ENCODE measurements at regions of chr5 and their contacts with region 1.

Region 1: DNA sequence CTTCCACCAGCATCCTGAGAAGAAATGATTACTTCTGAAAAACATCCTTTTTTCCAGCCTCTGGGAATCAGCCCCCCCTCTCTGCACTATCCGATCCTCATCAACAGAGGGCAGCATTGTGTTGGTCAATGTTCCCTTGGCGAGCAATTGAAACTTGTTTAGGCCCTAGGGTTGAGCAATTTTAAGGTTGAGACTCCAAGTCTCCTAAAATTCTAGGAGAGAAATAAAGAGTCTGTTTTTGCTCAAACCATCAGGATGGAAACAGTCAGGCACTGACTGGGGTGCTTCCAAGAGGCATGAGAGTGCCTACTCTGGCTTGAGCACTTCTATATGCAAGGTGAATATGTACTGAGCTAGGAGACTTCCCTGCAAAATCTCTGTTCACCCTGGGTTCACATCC is 12.4 kb upstream of the CYFIP2 start:
- DNase-seq: no peak
- H3K4me3 ChIP-seq: no peak overlapping the region
- H3K4me3 Mint-ChIP-seq: peak overlapping the region in 7 of 8 donors; percentile 61 to 86 (median 79)
- H3K27ac ChIP-seq: peak overlapping the region; percentile 64
- H3K27ac Mint-ChIP-seq: peak overlapping the region; percentile 84 to 98 (median 94)
- H3K4me1 ChIP-seq: peaks cover 97% of the 10 kb centered on the region
- H3K4me1 Mint-ChIP-seq: peaks cover 78 to 96% (median 88%) of the 10 kb centered on the region in 4 donors
- H3K27me3 ChIP-seq: no peaks in the 10 kb centered on the region
- H3K27me3 Mint-ChIP-seq: no peaks in the 10 kb centered on the region

Region 2: DNA sequence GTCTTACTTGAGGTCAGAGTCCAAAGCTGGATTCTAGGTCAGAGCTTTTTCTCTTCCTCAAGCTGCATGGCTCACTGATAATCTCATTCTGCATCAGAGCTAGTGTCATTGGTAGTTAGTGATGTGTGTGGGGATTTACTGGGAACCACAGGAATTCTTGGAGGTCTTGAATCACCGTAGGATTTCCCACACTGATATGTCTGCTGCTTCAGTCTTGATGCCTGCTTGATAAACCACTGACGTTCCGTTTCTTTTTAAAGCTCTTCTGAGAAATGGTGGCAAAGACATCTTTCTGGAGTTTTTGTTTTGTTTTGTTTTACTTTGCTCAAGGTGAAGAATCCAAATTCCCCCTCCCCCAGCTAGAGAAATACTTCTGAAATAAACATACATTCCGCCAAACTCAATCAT is 86.3 kb before region 1 on chr5:
- CTCF ChIA-PET with region 1: interaction called, 10 read pairs
- POLR2A ChIA-PET with region 1: interaction called, 7 read pairs
- intact Hi-C with region 1: no loop called
- DNase-seq: no peak
- H3K4me3 ChIP-seq: peak overlapping the region in 1 of 2 donors; percentile 12
- H3K4me3 Mint-ChIP-seq: peak overlapping the region; percentile 4 to 85 (median 67)
- H3K27ac ChIP-seq: peak overlapping the region; percentile 56
- H3K27ac Mint-ChIP-seq: peak overlapping the region; percentile 71 to 95 (median 80)
- H3K4me1 ChIP-seq: peaks cover 42% of the 10 kb centered on the region
- H3K4me1 Mint-ChIP-seq: peaks cover 42 to 85% (median 58%) of the 10 kb centered on the region in 4 donors
- H3K27me3 ChIP-seq: no peaks in the 10 kb centered on the region
- H3K27me3 Mint-ChIP-seq: no peaks in the 10 kb centered on the region

Region 3: GRCh38 chr5:157189223-157189622 is 64.3 kb before region 1 on chr5:
- CTCF ChIA-PET with region 1: interaction called, 13 read pairs
- POLR2A ChIA-PET with region 1: interaction called, 123 read pairs
- intact Hi-C with region 1: no loop called
- DNase-seq: no peak
- H3K4me3 ChIP-seq: peak overlapping the region; percentile 44 to 59
- H3K4me3 Mint-ChIP-seq: peak overlapping the region; percentile 84 to 100 (median 96)
- H3K27ac ChIP-seq: peak overlapping the region; percentile 64
- H3K27ac Mint-ChIP-seq: peak overlapping the region; percentile 84 to 97 (median 93)
- H3K4me1 ChIP-seq: peaks cover 97% of the 10 kb centered on the region
- H3K4me1 Mint-ChIP-seq: peaks cover 66 to 91% (median 78%) of the 10 kb centered on the region in 4 donors
- H3K27me3 ChIP-seq: no peaks in the 10 kb centered on the region
- H3K27me3 Mint-ChIP-seq: no peaks in the 10 kb centered on the region

Region 4: DNA sequence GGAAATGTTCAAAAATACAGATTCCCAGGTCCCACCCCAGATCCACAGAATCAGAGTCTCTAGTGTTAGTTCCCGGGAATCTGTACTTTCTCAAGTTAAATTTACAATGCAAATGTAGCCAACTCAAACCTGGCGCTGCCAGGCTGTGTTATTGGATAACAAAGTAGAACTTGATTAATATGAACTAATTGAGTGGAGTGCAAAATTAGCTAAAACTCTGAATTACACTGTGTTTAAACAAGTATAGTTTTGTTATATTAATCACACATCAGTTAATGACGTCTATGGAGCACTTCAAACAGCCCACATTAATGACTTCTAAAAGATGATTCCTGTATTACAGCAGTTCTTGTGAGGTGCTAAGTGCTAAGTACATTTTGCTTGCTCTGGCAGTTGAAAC is 20.0 kb before region 1 on chr5:
- CTCF ChIA-PET with region 1: interaction called, 11 read pairs
- POLR2A ChIA-PET with region 1: interaction called, 17 read pairs
- intact Hi-C with region 1: loop called (anchors 2 kb)
- DNase-seq: peak; percentile 47 to 83 (median 74)
- H3K4me3 ChIP-seq: no peak overlapping the region
- H3K4me3 Mint-ChIP-seq: peak overlapping the region in 4 of 8 donors; percentile 25 to 55 (median 47)
- H3K27ac ChIP-seq: peak overlapping the region; percentile 41
- H3K27ac Mint-ChIP-seq: peak overlapping the region; percentile 88 to 94 (median 90)
- H3K4me1 ChIP-seq: peaks cover 76% of the 10 kb centered on the region
- H3K4me1 Mint-ChIP-seq: peaks cover 32 to 62% (median 47%) of the 10 kb centered on the region in 4 donors
- H3K27me3 ChIP-seq: no peaks in the 10 kb centered on the region
- H3K27me3 Mint-ChIP-seq: no peaks in the 10 kb centered on the region

Region 5: DNA sequence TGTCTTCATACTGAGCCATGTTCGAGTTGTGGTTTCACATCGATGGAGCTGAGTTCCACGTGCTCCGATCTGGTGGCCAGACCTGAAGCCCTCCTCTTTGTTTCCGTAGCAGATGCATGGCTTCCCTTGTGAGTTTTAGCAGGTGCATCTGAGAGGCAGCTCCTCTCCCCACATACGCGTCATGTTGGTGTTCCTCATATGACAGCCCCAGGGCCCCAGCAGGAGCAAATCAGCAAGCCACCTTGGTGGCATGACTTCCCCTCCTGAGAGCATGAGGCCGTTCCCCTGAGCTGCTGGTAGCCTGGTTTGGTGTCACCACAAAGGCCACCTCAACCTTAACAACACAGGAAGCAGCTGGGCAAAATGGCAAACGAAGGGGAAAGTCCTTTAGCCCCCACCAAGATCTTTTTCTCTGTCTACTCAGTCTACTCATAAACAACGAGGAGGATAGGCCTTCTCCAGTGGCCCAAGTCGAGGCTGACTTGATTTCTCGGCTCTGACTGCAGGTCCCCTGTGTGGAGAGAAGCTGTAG is 18.3 kb after region 1 on chr5:
- CTCF ChIA-PET with region 1: interaction called, 36 read pairs
- POLR2A ChIA-PET with region 1: interaction called, 193 read pairs
- intact Hi-C with region 1: no loop called
- DNase-seq: peak; percentile 89 to 96 (median 93)
- H3K4me3 ChIP-seq: peak overlapping the region in 1 of 2 donors; percentile 33
- H3K4me3 Mint-ChIP-seq: peak overlapping the region; percentile 77 to 97 (median 86)
- H3K27ac ChIP-seq: peak overlapping the region; percentile 69
- H3K27ac Mint-ChIP-seq: peak overlapping the region; percentile 96 to 100 (median 98)
- H3K4me1 ChIP-seq: peaks cover 99% of the 10 kb centered on the region
- H3K4me1 Mint-ChIP-seq: peaks cover 73 to 96% (median 83%) of the 10 kb centered on the region in 4 donors
- H3K27me3 ChIP-seq: no peaks in the 10 kb centered on the region
- H3K27me3 Mint-ChIP-seq: no peaks in the 10 kb centered on the region

Region 6: GRCh38 chr5:157303667-157304327 is 50.2 kb after region 1 on chr5:
- CTCF ChIA-PET with region 1: interaction called, 237 read pairs
- POLR2A ChIA-PET with region 1: interaction called, 29 read pairs
- intact Hi-C with region 1: no loop called
- DNase-seq: peak; percentile 54 to 72 (median 66)
- H3K4me3 ChIP-seq: peak overlapping the region; percentile 27 to 33
- H3K4me3 Mint-ChIP-seq: peak overlapping the region; percentile 78 to 94 (median 86)
- H3K27ac ChIP-seq: peak overlapping the region; percentile 23
- H3K27ac Mint-ChIP-seq: peak overlapping the region; percentile 79 to 94 (median 93)
- H3K4me1 ChIP-seq: peaks cover 60% of the 10 kb centered on the region
- H3K4me1 Mint-ChIP-seq: peaks cover 48 to 69% (median 60%) of the 10 kb centered on the region in 4 donors
- H3K27me3 ChIP-seq: no peaks in the 10 kb centered on the region
- H3K27me3 Mint-ChIP-seq: no peaks in the 10 kb centered on the region

Region 7: GRCh38 chr5:157328277-157328912 is 74.8 kb after region 1 on chr5:
- CTCF ChIA-PET with region 1: interaction called, 25 read pairs
- POLR2A ChIA-PET with region 1: no interaction called
- intact Hi-C with region 1: no loop called
- DNase-seq: peak; percentile 66 to 69 (median 67)
- H3K4me3 ChIP-seq: no peak overlapping the region
- H3K4me3 Mint-ChIP-seq: peak overlapping the region; percentile 3 to 69 (median 58)
- H3K27ac ChIP-seq: peak overlapping the region; percentile 30
- H3K27ac Mint-ChIP-seq: peak overlapping the region; percentile 72 to 96 (median 89)
- H3K4me1 ChIP-seq: peaks cover 27% of the 10 kb centered on the region
- H3K4me1 Mint-ChIP-seq: peaks cover 23 to 44% (median 26%) of the 10 kb centered on the region in 4 donors
- H3K27me3 ChIP-seq: no peaks in the 10 kb centered on the region
- H3K27me3 Mint-ChIP-seq: no peaks in the 10 kb centered on the region

Region 8: DNA sequence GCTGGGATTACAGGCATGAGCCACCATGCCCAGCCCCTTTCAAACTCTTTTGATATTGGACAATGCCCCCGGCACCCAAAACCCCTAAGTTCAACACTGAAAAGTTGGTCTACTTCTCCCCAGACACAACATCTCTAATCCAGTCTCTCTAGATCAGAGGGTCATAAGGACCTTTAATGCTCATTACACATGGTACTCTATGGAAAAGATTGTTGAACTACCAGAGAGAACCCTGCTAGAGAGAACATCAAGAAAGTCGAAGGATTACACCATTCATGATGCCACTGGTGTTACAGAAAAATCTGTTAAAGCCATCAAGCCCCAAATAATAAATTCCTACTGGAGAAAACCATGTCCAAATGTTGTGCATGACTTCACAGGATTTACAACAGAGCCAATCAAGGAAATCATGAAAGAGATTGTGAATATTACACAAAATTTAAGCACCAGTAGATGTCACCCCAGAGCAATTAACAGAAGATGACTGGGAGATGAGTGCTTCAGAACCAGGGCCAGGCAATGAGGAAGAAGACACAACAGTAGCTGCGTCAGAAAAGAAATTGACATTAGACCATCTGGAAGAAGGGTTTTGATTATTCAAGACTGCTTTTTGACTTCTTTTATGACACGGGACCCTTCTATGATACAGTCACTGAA is 178.1 kb after region 1 on chr5:
- CTCF ChIA-PET with region 1: no interaction called
- POLR2A ChIA-PET with region 1: no interaction called
- intact Hi-C with region 1: no loop called
- DNase-seq: peak; percentile 49 to 63 (median 59)
- H3K4me3 ChIP-seq: no peak overlapping the region
- H3K4me3 Mint-ChIP-seq: peak overlapping the region in 4 of 8 donors; percentile 17 to 65 (median 42)
- H3K27ac ChIP-seq: no peak overlapping the region
- H3K27ac Mint-ChIP-seq: peak overlapping the region in 6 of 7 donors; percentile 3 to 83 (median 77)
- H3K4me1 ChIP-seq: peaks cover 4% of the 10 kb centered on the region
- H3K4me1 Mint-ChIP-seq: peaks cover 5 to 7% (median 5%) of the 10 kb centered on the region in 4 donors
- H3K27me3 ChIP-seq: no peaks in the 10 kb centered on the region
- H3K27me3 Mint-ChIP-seq: no peaks in the 10 kb centered on the region